ENCODE measurements at regions of chr19 and their contacts with region 1.

Region 1: DNA sequence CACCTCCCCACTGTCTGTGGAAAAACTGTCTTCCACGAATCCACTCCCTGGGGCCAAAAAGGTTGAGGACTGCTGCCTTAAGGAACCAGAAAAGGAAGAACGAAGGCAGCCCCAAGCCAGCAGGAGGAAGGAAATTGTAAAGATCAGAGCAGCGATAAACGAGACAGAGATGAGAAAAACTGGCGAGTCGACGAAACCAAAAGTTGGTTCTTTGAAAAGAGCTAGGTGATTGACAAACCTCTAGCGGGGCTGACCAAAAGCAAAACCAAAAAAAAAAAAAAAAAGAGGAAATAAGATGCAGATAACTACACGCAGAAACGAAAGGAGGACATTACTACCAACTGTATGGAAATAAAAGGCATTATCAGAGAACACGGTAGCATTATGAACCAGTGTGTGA is 76.9 kb downstream of the GADD45B start:
- DNase-seq: peak; percentile 56
- H3K4me3 ChIP-seq: peak overlapping the region; percentile 20 to 73 (median 24)
- H3K27ac ChIP-seq: peak overlapping the region; percentile 72
- H3K4me1 ChIP-seq: peaks cover 22% of the 10 kb centered on the region
- H3K27me3 ChIP-seq: no peaks in the 10 kb centered on the region
- CTCF ChIP-seq: no peak
- POLR2A ChIP-seq: no peak

Region 2: GRCh38 chr19:2636897-2637683 is 84.2 kb after region 1 on chr19:
- CTCF ChIA-PET with region 1: interaction called, 11 read pairs
- POLR2A ChIA-PET with region 1: no interaction called
- dilution Hi-C with region 1: no loop called
- intact Hi-C with region 1: no loop called
- DNase-seq: peak; percentile 43
- H3K4me3 ChIP-seq: no peak overlapping the region
- H3K27ac ChIP-seq: no peak overlapping the region
- H3K4me1 ChIP-seq: no peaks in the 10 kb centered on the region
- H3K27me3 ChIP-seq: no peaks in the 10 kb centered on the region
- CTCF ChIP-seq: peak; percentile 75 to 93
- POLR2A ChIP-seq: no peak